Tibial artery (tissue), 4 donors: ENCODE measurements at regions of chr15 and their contacts with region 1.

Region 1: DNA sequence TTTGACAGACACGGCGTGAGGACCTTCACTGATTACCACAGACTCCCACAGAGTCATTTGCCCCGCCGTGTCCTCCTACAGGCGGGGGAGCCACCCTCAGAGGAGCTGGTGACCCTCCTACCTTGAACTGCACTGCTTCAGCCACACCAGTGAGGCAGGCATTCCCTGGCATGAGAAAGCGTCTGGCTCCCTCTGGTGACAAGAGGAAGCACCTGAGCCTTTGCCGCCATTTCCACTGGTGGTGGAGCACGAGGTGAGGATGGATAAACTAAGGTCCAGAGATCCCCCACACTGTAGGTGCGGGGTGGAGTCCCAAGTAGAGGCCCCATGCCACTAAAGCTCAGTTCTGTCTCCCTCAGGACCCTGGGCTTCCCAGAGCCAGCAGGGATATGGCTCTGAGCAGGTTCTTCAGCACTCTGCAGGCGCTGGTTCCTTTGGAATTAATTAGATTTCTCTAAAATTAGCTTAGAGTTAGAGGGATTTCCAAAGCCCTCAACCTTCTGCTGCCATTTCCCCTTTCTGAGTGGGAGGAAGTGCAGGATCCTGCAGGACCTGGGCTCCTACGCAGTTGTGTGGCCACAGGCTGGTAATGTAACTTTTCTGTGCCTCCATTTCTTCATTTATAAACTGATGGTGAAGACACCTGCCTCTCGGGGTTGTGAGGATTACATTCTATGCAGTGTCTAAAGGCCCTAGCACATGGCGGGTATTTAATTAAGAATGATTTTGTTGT is 224.0 kb downstream of the SLCO3A1 start:
- DNase-seq: peak; percentile 72 to 85
- H3K4me3 ChIP-seq: no peak overlapping the region
- H3K27ac ChIP-seq: no peak overlapping the region
- H3K4me1 ChIP-seq: peaks cover 0 to 25% (median 5%) of the 10 kb centered on the region in 4 donors
- H3K27me3 ChIP-seq: no peaks in the 10 kb centered on the region
- CTCF ChIP-seq: peak; percentile 74 to 89

Region 2: DNA sequence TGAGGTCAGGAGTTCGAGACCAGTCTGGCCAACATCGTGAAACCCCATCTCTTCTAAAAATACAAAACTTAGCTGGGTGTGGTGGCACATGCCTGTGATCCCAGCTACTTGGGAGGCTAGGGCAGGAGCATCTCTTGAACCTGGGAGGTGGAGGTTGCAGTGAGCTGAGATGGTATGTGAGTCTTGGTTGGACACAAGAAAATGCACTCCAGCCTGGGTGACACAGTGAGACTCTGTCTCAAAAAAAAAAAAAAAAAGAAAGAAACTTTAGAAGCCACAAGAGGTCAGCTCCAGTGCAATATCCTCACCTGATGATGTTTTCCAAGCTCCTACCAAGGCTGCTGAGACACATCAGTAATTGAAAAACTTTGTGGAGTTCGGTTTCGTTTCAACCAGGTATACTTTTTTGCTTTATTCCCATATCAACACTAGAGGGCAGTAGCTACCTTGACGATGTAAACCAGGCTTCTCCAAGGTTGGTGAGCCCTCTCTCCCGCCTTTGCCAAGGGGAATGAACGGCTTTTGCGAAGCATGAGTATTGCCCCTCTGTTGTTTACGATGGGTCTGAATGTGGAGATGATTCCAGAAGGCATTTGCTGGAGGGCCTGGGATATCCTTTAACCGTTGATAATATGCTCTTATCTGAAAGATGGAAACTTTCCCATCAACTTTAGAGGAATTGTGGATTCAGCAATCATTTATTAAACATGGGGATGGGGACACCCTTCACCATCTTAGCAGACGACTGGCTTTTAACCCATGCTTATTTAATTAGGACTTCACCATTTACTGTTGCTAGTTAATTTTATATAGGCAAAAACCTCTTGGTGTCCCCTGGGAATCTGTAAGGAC is 774.7 kb before region 1 on chr15:
- intact Hi-C with region 1: loop called (anchors 5 kb)
- DNase-seq: no peak
- H3K4me3 ChIP-seq: no peak overlapping the region
- H3K27ac ChIP-seq: no peak overlapping the region
- H3K4me1 ChIP-seq: peaks cover 0 to 3% (median 0%) of the 10 kb centered on the region in 4 donors
- H3K27me3 ChIP-seq: peaks cover 0 to 30% of the 10 kb centered on the region in 2 donors
- CTCF ChIP-seq: peak; percentile 64 to 66

Region 3: DNA sequence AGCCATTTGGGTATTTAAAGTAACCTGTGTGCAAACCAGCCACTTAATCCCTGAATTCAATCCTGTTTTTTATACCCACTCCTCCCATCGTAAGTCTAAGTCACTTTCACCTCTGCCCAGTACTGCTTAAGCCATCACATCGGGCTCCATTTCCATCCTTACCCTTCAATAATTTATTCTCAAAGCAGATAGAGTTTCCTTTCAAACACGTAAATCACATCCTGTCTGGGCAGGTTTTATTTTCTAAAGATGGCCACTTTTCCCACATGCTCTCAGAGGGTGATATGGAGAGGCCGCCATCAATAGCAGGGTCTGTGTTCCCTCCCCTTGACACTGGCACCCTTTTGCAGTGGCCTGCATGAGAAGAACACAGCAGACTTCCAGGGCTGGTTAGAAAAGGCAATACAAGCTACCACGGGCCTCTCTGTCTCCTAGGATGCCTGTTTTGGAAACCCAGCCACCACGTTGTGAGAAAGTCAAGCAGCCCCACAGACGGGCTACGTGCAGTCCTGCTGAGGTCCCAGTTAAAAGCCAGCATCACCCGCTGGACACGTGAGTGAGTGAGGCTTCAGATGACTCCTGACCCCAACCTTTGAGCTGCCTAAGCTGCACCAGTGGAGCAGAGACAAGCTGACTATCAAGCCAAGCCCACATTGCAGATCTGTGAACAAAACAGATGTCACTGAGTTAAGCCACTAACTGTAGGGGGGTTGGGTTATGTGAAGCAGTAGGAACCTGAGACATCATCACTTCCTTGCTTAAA is 465.8 kb before region 1 on chr15:
- intact Hi-C with region 1: no loop called
- DNase-seq: no peak
- H3K4me3 ChIP-seq: no peak overlapping the region
- H3K27ac ChIP-seq: no peak overlapping the region
- H3K4me1 ChIP-seq: no peaks in the 10 kb centered on the region
- H3K27me3 ChIP-seq: no peaks in the 10 kb centered on the region
- CTCF ChIP-seq: no peak

Region 4: DNA sequence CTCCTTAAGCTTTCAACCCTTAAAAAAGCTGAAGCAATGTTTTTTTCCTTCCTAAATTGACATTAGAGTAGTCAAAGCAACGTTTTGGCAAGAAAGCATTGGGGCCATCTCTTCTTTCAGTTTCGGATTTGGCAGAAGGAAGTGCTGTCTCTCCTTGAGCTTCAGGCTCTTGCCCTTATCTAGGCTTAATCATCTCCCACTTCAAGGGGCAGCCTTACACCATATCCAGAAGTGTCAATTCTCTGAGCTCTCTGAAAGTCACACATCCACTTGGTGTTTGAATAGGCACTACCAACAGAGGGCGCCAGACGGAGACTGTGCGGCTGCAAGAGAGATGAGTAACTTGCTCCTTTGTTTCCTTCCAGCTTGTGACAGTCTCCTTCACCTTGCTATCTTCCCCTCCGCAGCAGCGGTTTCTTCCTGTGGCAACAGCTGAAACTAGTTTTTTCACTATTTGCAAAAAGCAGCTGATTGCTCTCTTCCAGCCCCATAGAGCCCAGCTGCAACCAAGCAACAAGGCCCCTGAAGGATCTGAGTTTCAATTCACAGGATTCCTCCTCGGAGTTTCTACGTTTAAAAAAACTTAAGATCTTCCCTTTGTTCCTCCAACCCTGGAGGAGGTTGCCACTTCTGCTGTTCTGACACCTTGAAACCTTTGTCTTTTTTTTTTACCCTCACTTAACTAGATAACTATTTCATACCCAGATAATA is 371.0 kb before region 1 on chr15:
- intact Hi-C with region 1: loop called (anchors 10 kb)
- DNase-seq: peak; percentile 83 to 87
- H3K4me3 ChIP-seq: no peak overlapping the region
- H3K27ac ChIP-seq: no peak overlapping the region
- H3K4me1 ChIP-seq: no peaks in the 10 kb centered on the region
- H3K27me3 ChIP-seq: no peaks in the 10 kb centered on the region
- CTCF ChIP-seq: peak; percentile 71 to 76

Region 5: GRCh38 chr15:91852741-91853510 is 224.6 kb before region 1 on chr15:
- intact Hi-C with region 1: loop called (anchors 5 kb)
- DNase-seq: peak; percentile 77 to 87
- H3K4me3 ChIP-seq: peak overlapping the region; percentile 83 to 84
- H3K27ac ChIP-seq: peak overlapping the region; percentile 78 to 84
- H3K4me1 ChIP-seq: peaks cover 0 to 41% (median 22%) of the 10 kb centered on the region in 4 donors
- H3K27me3 ChIP-seq: no peaks in the 10 kb centered on the region
- CTCF ChIP-seq: peak; percentile 60 to 73

Region 6: GRCh38 chr15:91885714-91886270 is 191.7 kb before region 1 on chr15:
- intact Hi-C with region 1: loop called (anchors 10 kb)
- DNase-seq: no peak
- H3K4me3 ChIP-seq: no peak overlapping the region
- H3K27ac ChIP-seq: no peak overlapping the region
- H3K4me1 ChIP-seq: peaks cover 0 to 43% (median 9%) of the 10 kb centered on the region in 4 donors
- H3K27me3 ChIP-seq: no peaks in the 10 kb centered on the region
- CTCF ChIP-seq: peak; percentile 28 to 42